Right lobe of liver (tissue), 6 donors: ENCODE measurements at regions of chr13 and their contacts with region 1.

Region 1: DNA sequence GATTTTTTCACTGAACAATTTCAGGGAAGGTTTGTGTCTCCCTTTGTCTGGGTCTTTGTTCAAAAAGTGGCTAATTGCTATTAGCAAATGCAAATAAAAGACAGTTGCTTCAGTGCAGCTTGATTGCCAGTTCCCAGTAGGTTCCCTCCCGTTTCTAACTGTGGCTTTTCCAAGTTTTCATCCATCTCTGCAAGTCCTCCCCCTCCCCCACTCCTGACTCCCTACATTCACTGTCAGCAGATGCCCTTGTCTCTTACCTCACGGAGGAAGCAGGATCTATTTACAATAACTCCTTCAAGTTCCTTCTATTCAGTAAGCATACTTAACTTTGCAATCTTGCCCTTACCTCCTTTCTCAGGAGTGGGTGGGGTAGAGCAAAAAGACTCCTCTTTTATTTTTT is 55.4 kb upstream of the SCEL start:
- DNase-seq: no peak
- ATAC-seq: no peak
- H3K4me3 ChIP-seq: no peak overlapping the region
- H3K27ac ChIP-seq: no peak overlapping the region
- H3K4me1 ChIP-seq: no peaks in the 10 kb centered on the region
- H3K27me3 ChIP-seq: no peaks in the 10 kb centered on the region
- CTCF ChIP-seq: no peak
- POLR2A ChIP-seq: no peak

Region 2: DNA sequence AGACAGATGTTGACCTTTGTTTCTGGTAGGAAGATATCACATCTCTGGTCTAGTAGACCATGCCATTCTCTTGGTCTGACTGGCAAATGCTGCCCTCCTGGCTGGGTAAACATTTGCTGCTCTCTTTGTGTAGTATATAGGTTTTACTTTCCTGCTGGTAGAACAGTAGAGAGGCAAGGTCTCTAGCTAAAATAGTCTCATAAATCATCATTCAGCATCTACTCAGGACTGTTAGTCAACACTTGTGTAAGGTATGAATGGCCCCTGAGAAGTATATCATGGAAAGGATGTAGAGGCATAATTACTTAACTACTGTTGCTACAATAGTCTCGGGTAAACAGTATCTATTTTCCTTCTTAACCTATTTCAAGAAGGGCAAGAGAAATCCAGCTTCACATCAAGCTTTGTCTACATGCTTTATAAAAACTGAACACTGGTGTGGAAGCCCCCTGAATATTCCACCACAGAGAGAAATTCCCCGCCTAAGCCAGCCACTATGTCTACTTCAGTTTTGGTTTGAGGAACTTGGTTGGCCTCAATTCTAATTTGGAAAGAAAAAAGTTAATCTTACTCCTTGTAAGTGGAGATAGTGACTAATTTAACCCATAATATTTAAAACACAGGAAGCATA is 134.8 kb before region 1 on chr13:
- intact Hi-C with region 1: loop called in 1 of 2 experiments (anchors 10 kb)
- DNase-seq: no peak
- ATAC-seq: no peak
- H3K4me3 ChIP-seq: no peak overlapping the region
- H3K27ac ChIP-seq: no peak overlapping the region
- H3K4me1 ChIP-seq: no peaks in the 10 kb centered on the region
- H3K27me3 ChIP-seq: no peaks in the 10 kb centered on the region
- CTCF ChIP-seq: no peak
- POLR2A ChIP-seq: no peak